K562 (cell line): ENCODE measurements at regions of chr21 and their contacts with region 1.

Region 1: GRCh38 chr21:35051287-35051818 is 2.3 kb upstream of the RUNX1 start:
- DNase-seq: peak; percentile 82 to 95 (median 88)
- ATAC-seq: peak; percentile 98
- H3K4me3 ChIP-seq: no peak overlapping the region
- H3K27ac ChIP-seq: peak overlapping the region; percentile 70
- H3K4me1 ChIP-seq: peaks cover 18 to 50% of the 10 kb centered on the region in 2 experiments
- H3K27me3 ChIP-seq: no peaks in the 10 kb centered on the region
- CTCF ChIP-seq: peak; percentile 87 to 90 (median 87)
- EP300 ChIP-seq: peak; percentile 55; the same call in 1 of the 2 replicates
- POLR2A ChIP-seq: 0 out of 2 replicates have a peak, but pooled peaks have one; percentile 45
- RAD21 ChIP-seq: peak; percentile 94 to 95

Region 2: DNA sequence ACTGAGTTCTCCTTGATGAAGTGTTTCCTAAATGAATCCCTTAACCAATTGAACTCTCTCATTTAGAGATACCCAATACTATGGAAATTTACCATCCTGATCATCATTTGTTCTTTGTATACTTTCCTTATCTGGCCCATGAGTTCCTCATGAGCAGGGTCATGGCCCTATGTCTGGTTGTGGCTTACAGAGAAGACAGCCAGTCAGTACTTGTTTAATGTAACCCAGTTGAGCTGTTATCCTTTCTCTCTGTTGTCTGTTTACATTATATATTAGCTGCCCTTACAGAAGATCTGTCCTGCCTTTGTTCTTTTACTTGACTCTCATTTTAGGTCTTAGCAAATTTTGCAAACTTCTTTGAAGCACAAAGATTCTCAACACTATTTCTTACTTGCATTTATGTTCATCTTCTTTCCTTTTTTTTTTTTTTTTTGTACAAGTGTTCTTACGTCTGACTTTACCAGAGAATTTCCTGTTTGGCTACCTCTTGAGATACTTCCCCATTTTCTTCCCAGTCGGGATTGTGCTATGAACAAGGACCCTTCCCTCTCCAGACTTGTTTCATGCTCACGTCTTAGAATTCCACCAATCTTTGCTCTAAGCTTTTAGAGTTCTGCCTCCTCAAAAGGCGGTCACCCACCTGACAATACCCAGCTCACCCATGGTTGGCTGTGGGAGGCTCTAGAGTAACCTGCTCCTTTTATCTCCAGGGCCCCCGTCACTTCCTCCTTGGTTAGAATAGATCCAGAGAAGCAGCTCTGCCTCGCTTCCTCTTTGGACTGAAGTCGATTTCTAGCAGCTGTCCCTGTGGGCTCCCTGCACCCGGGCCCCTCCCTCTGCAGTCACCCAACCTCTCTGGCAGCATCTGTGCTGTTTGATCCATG is 51.4 kb after region 1 on chr21:
- CTCF ChIA-PET with region 1: no interaction called
- POLR2A ChIA-PET with region 1: no interaction called
- in situ Hi-C with region 1: no loop called
- intact Hi-C with region 1: loop called (anchors 2 kb)
- DNase-seq: peak; percentile 39 to 82 (median 58)
- ATAC-seq: peak; percentile 50
- H3K4me3 ChIP-seq: no peak overlapping the region
- H3K27ac ChIP-seq: peak overlapping the region; percentile 70
- H3K4me1 ChIP-seq: peaks cover 37 to 77% of the 10 kb centered on the region in 2 experiments
- H3K27me3 ChIP-seq: no peaks in the 10 kb centered on the region
- CTCF ChIP-seq: no peak
- EP300 ChIP-seq: peak; percentile 5; the same call in 1 of the 2 replicates
- POLR2A ChIP-seq: no peak
- RAD21 ChIP-seq: no peak; a peak in 1 of 4 replicates

Region 3: DNA sequence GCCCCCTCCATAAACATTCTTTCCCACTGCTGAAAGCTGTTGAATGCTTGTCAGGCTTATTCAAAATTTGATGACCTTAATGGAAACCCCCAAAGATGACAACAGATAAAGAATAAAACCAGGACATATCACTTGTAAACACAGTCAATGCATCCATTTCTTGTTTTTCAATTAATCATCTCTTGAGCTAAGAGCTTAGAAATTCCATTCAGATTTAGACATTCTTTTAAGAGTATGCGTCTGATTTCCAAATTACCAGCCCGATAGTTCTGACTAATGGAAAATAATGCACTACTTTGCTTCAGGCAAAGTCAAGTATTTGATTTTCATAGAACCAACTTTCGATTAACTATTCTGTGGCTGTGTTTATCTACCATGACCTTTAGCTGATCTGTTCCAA is 98.3 kb after region 1 on chr21:
- CTCF ChIA-PET with region 1: no interaction called
- POLR2A ChIA-PET with region 1: no interaction called
- in situ Hi-C with region 1: no loop called
- intact Hi-C with region 1: loop called (anchors 5 kb)
- DNase-seq: no peak
- ATAC-seq: no peak
- H3K4me3 ChIP-seq: no peak overlapping the region
- H3K27ac ChIP-seq: no peak overlapping the region
- H3K4me1 ChIP-seq: peaks cover 0 to 4% of the 10 kb centered on the region in 2 experiments; a peak in 3 of 5 replicates
- H3K27me3 ChIP-seq: no peaks in the 10 kb centered on the region
- CTCF ChIP-seq: no peak
- EP300 ChIP-seq: no peak
- POLR2A ChIP-seq: no peak
- RAD21 ChIP-seq: no peak

Region 4: GRCh38 chr21:35204850-35205541 is 153.6 kb after region 1 on chr21:
- CTCF ChIA-PET with region 1: no interaction called
- POLR2A ChIA-PET with region 1: interaction called, 5 read pairs
- in situ Hi-C with region 1: no loop called
- intact Hi-C with region 1: loop called (anchors 2 kb)
- DNase-seq: peak; percentile 69 to 85 (median 73)
- ATAC-seq: peak; percentile 75
- H3K4me3 ChIP-seq: peak overlapping the region; percentile 18
- H3K27ac ChIP-seq: peak overlapping the region; percentile 85
- H3K4me1 ChIP-seq: peaks cover 24 to 48% of the 10 kb centered on the region in 2 experiments
- H3K27me3 ChIP-seq: no peaks in the 10 kb centered on the region
- CTCF ChIP-seq: peak; percentile 26 to 52 (median 42); a peak in 4 of 6 replicates
- EP300 ChIP-seq: no peak; the same call in 1 of the 2 replicates
- POLR2A ChIP-seq: no peak; the same call in 1 of the 2 replicates
- RAD21 ChIP-seq: peak; percentile 56 to 62

Region 5: DNA sequence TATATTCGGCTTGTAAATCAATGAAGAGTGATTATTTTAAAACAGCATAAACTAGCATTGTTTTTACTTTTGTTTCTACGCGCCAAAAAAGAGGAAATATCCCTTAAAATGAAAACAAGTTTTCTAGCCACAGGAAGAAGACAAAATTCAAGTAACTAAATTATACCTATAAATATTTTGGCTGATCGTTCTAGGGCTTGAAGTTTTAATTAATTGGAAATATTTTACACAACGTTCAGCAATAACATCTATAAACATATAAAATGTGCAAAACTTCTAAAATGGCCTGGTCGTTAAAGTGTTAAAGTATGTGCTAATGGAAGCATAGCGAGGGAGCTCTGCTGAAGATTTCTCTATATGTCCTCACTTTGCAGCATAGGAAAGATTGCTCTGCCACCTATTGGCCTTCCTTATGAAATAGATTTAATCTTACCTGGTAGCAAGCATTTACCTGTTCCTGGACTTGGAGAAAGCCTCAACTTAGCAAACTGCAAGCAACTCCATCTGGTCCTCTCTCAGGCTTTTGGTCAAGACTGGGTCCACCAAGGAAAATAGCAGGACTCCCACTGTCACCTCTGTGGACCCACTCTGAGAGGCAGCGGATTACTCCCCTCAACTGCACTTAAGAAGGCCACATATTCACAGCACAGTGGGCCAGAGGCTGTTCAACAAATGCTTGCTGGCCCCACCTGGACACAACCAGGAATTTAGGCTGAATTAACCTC is 349.0 kb after region 1 on chr21:
- CTCF ChIA-PET with region 1: interaction called, 3 read pairs
- POLR2A ChIA-PET with region 1: no interaction called
- in situ Hi-C with region 1: no loop called
- intact Hi-C with region 1: loop called (anchors 5 kb)
- DNase-seq: peak; percentile 18 to 79 (median 38)
- ATAC-seq: peak; percentile 92
- H3K4me3 ChIP-seq: no peak overlapping the region
- H3K27ac ChIP-seq: no peak overlapping the region
- H3K4me1 ChIP-seq: peaks cover 0 to 15% of the 10 kb centered on the region in 2 experiments; a peak in 3 of 5 replicates
- H3K27me3 ChIP-seq: no peaks in the 10 kb centered on the region; a peak in 2 of 5 replicates
- CTCF ChIP-seq: peak; percentile 53 to 82 (median 70)
- EP300 ChIP-seq: peak; percentile 48; the same call in 1 of the 2 replicates
- POLR2A ChIP-seq: no peak
- RAD21 ChIP-seq: peak; percentile 97 to 98